CD4-positive, alpha-beta memory T cell (primary cell): ENCODE measurements at regions of chr11 and their contacts with region 1.

Region 1: DNA sequence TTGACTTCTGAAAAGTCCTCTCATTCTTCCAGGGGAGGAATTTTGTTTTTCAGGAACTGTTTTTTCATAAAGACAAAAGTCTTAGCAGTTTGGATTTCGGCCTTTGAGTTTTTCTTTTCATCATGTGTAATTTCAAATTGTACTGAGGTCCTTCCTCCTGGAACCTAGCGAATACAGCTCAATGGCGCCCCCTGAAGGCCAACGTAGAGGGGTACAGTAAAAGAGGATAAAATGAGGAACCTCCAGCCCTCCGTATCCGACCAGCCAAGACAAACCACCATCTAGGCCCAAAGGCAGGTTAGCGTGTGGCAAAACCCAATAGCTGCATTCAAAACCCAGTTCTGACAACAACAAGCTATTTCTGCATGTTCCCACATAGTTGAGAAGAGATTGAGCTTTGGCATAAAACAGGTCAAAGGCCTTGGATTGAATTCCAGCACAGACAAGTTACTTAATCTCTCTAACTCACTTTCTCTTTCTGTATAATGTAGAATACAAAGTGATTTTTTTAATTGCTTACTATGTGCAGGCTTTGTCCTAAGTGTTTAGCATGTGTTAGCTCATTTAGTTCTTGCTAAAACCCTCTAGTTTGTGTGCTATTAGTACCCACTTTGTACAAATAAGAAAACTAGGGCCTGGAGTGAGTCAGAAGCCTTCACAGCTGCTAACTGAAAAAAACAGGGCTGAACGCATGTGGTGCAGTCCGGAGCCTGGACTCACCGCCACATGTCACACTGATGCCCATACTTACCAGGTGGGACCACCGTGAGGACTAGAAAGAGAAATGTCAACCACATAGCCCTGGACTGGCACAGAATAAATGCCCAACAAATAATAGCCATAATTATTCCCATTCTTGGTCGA is 43.2 kb upstream of the ETS1 start:
- DNase-seq: peak; percentile 84 to 88 (median 86)
- H3K4me3 ChIP-seq: no peak overlapping the region
- H3K4me3 Mint-ChIP-seq: peak overlapping the region in 7 of 8 donors; percentile 45 to 88 (median 75)
- H3K27ac ChIP-seq: peak overlapping the region; percentile 49
- H3K27ac Mint-ChIP-seq: peak overlapping the region; percentile 92 to 97 (median 93)
- H3K4me1 ChIP-seq: peaks cover 64% of the 10 kb centered on the region
- H3K4me1 Mint-ChIP-seq: peaks cover 49 to 68% (median 59%) of the 10 kb centered on the region in 4 donors
- H3K27me3 ChIP-seq: no peaks in the 10 kb centered on the region
- H3K27me3 Mint-ChIP-seq: no peaks in the 10 kb centered on the region

Region 2: DNA sequence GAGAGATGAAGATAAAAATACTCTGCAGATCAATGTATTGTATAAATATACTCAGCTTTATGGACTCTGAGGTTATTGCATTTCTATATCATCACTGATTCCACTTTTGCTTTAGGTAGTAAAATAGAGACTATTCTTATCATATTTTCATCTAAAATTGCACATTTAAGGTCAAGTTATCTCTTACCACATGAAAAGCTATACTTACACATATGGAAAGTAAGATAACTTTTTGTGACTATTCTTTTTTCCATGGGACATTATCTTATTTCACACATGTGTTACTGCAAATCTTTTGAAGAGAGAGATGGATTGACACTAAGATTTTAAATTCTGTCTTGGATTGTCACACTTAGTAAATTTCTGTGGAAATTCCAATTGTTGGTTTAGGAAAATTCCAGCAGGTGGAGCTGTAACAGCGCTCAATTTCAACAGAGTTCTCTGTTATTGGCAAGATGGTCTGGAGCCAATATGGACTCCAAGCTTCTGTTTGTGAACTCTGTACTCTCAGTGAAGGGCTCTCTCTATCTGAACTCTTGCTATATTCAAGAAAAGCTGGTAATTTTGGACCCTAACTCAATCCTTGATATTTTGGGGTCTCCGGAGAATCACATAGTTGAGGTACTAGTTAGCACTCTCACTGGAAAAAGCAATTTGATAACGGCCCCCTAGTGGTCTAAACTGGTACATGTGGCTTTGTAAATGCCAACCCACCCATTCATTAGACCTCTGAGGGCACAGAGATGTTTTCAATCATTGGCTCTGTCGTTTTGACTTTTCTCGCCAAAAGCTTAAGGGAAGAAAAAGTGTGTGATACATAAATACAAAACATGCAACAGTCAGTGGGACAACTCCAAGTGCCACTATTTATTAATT is 472.9 kb before region 1 on chr11:
- CTCF ChIA-PET with region 1: interaction called, 84 read pairs
- POLR2A ChIA-PET with region 1: interaction called, 3 read pairs
- intact Hi-C with region 1: loop called (anchors 5 kb)
- DNase-seq: peak; percentile 60 to 80 (median 76)
- H3K4me3 ChIP-seq: peak overlapping the region; percentile 13 to 27
- H3K4me3 Mint-ChIP-seq: peak overlapping the region; percentile 77 to 91 (median 85)
- H3K27ac ChIP-seq: no peak overlapping the region
- H3K27ac Mint-ChIP-seq: peak overlapping the region in 5 of 7 donors; percentile 54 to 73 (median 61)
- H3K4me1 ChIP-seq: no peaks in the 10 kb centered on the region
- H3K4me1 Mint-ChIP-seq: peaks cover 0 to 8% (median 5%) of the 10 kb centered on the region in 4 donors
- H3K27me3 ChIP-seq: no peaks in the 10 kb centered on the region
- H3K27me3 Mint-ChIP-seq: no peaks in the 10 kb centered on the region

Region 3: GRCh38 chr11:128290106-128290840 is 340.3 kb before region 1 on chr11:
- CTCF ChIA-PET with region 1: interaction called, 173 read pairs
- POLR2A ChIA-PET with region 1: interaction called, 62 read pairs
- intact Hi-C with region 1: loop called (anchors 1 kb)
- DNase-seq: peak; percentile 84 to 89 (median 86)
- H3K4me3 ChIP-seq: peak overlapping the region; percentile 68
- H3K4me3 Mint-ChIP-seq: peak overlapping the region; percentile 87 to 95 (median 94)
- H3K27ac ChIP-seq: peak overlapping the region; percentile 90
- H3K27ac Mint-ChIP-seq: peak overlapping the region; percentile 98 to 100 (median 99)
- H3K4me1 ChIP-seq: peaks cover 89% of the 10 kb centered on the region
- H3K4me1 Mint-ChIP-seq: peaks cover 70 to 100% (median 84%) of the 10 kb centered on the region in 4 donors
- H3K27me3 ChIP-seq: no peaks in the 10 kb centered on the region
- H3K27me3 Mint-ChIP-seq: no peaks in the 10 kb centered on the region

Region 4: DNA sequence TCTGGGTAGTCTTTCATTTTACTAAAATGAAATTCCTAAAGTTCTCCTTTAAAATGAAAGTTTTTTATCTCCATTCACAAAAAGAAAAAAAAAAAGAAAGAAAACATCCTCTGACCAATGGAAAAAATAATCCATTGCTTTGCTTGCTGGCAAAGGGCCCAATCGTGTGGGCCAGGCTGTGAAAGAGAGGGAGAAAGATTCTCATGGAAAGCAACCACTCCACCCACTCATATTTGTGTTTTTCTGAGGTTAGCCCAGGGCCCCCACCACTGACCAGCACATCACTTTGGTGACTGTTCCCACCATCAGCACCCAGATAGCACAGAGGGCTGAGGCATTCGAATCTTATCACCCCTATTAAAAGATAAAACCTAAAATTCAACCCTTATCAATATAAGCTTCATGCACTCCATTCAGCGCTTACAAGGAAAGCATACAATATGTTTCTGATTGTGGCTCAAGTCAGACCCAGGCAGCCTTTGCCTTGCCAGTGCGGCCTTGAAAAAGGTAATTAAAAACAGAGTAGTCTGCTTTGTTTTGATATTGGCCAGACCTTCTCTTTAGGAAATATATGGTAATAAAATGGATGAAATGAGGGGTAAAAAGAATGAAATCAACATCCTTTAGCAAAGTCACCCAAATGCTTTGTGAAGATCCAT is 236.0 kb before region 1 on chr11:
- CTCF ChIA-PET with region 1: no interaction called
- POLR2A ChIA-PET with region 1: no interaction called
- intact Hi-C with region 1: no loop called
- DNase-seq: no peak
- H3K4me3 ChIP-seq: no peak overlapping the region
- H3K4me3 Mint-ChIP-seq: no peak overlapping the region
- H3K27ac ChIP-seq: no peak overlapping the region
- H3K27ac Mint-ChIP-seq: peak overlapping the region in 1 of 7 donors; percentile 46
- H3K4me1 ChIP-seq: no peaks in the 10 kb centered on the region
- H3K4me1 Mint-ChIP-seq: peaks cover 8 to 23% (median 14%) of the 10 kb centered on the region in 4 donors
- H3K27me3 ChIP-seq: no peaks in the 10 kb centered on the region
- H3K27me3 Mint-ChIP-seq: no peaks in the 10 kb centered on the region

Region 5: DNA sequence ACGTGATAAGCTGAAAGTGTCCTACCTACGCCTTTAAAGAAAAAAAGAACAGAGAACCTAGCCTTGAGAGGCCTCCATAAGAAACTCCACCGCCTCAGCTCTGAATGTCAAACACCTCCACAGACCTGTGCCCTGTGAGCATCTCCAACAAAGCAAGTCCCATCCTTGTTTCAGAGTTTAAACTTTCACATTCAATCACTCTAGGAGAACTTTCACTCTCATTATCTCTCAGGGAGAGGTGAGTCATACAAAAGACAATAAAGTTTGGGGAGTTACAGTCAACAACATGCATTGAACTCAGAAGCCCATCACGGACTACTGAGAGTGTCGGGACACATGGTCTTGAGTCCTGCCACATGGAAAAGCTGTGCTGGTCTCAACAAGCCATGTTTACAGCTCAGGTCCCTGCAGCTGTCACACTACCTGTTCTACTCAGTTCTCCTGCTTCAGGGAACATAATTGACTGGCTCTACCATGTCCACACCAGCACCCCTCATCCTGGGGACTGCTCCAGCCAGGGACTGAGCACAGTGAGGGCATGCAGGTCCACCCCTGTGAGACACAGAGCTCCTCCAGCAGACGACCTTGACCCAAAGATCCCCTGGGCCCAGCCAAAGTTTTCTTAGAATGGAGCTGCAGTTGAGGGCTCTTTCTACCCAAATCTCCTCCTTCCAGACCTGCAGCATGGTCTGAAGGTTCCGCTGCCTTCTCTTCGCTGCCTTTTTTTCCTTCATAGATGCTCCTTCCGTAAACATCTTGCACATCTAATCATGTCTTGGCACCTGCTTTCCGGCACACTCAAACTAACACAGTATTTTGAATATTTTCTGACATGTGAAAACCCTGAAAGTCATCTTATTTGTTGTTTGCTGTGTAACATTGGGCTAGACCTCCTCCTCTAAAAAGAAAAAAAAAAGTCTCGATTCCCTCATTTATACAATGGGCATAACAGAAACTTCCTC is 158.2 kb before region 1 on chr11:
- CTCF ChIA-PET with region 1: interaction called, 44 read pairs
- POLR2A ChIA-PET with region 1: interaction called, 62 read pairs
- intact Hi-C with region 1: no loop called
- DNase-seq: peak in 4 of 5 donors; percentile 51 to 82 (median 57)
- H3K4me3 ChIP-seq: peak overlapping the region; percentile 5 to 27
- H3K4me3 Mint-ChIP-seq: peak overlapping the region; percentile 70 to 93 (median 84)
- H3K27ac ChIP-seq: peak overlapping the region; percentile 94
- H3K27ac Mint-ChIP-seq: peak overlapping the region; percentile 98 to 99 (median 99)
- H3K4me1 ChIP-seq: peaks cover 100% of the 10 kb centered on the region
- H3K4me1 Mint-ChIP-seq: peaks cover 85 to 98% (median 92%) of the 10 kb centered on the region in 4 donors
- H3K27me3 ChIP-seq: no peaks in the 10 kb centered on the region
- H3K27me3 Mint-ChIP-seq: no peaks in the 10 kb centered on the region

Region 6: DNA sequence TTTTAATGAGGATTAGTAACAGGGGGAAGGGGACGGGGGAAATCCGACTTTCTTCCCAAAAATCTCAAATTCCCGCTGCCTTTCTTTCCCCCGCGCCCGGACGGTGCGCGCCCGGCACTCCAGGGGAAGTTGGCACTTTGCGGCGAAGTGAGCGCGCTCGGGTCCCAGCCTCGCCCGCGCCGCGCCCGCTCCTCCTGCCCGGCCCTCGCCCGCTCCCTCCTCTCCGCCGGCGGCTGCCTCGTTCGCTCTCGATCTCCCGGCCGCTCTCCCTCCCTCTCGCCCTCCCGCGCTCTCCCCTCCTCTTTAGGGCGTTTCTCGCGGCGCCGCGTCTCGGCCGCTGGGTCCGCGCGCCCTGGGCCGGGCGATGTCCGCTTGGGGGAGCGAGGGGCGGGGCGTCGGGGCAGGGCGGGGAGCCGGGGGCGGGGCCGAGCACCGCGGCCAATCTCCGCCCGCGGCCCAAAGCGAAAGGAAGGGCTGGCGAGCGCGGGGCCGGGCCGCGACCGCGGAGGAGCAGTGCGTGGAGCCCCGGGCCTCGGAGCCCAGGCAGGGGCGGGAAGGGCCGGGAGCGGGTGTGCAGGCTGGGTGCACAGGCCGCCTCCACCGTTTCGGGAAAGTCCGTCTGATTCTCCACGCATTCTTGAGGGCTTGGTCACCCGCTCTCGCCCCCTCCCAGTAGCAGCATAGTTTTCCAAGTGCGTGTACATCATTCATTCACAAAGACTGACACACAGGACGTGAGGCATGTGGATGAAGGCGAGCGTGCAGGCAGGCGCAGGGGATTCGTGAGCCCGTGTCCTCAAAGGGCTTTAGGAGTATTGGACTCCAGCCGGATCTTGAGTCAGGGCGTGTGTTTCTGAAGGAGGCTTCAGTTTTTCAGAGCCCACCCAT is 108.3 kb before region 1 on chr11:
- CTCF ChIA-PET with region 1: interaction called, 105 read pairs
- POLR2A ChIA-PET with region 1: interaction called, 949 read pairs
- intact Hi-C with region 1: no loop called
- DNase-seq: peak; percentile 81 to 90 (median 87)
- H3K4me3 ChIP-seq: peak overlapping the region; percentile 50 to 92
- H3K4me3 Mint-ChIP-seq: peak overlapping the region; percentile 92 to 100 (median 97)
- H3K27ac ChIP-seq: peak overlapping the region; percentile 89
- H3K27ac Mint-ChIP-seq: peak overlapping the region; percentile 96 to 99 (median 98)
- H3K4me1 ChIP-seq: peaks cover 45% of the 10 kb centered on the region
- H3K4me1 Mint-ChIP-seq: peaks cover 33 to 59% (median 44%) of the 10 kb centered on the region in 4 donors
- H3K27me3 ChIP-seq: no peaks in the 10 kb centered on the region
- H3K27me3 Mint-ChIP-seq: no peaks in the 10 kb centered on the region

Region 7: GRCh38 chr11:128757235-128757711 is 126.7 kb after region 1 on chr11:
- CTCF ChIA-PET with region 1: interaction called, 58 read pairs
- POLR2A ChIA-PET with region 1: interaction called, 10 read pairs
- intact Hi-C with region 1: loop called (anchors 1 kb)
- DNase-seq: peak; percentile 64 to 85 (median 72)
- H3K4me3 ChIP-seq: no peak overlapping the region
- H3K4me3 Mint-ChIP-seq: peak overlapping the region in 6 of 8 donors; percentile 8 to 82 (median 54)
- H3K27ac ChIP-seq: peak overlapping the region; percentile 34
- H3K27ac Mint-ChIP-seq: peak overlapping the region; percentile 77 to 96 (median 94)
- H3K4me1 ChIP-seq: peaks cover 70% of the 10 kb centered on the region
- H3K4me1 Mint-ChIP-seq: peaks cover 59 to 87% (median 76%) of the 10 kb centered on the region in 4 donors
- H3K27me3 ChIP-seq: no peaks in the 10 kb centered on the region
- H3K27me3 Mint-ChIP-seq: no peaks in the 10 kb centered on the region